Activated B cell treated with CpG ODN at 0.5 μM for 24 hours (primary cell): ENCODE measurements at regions of chr12 and their contacts with region 1.

Region 1: GRCh38 chr12:49110464-49111155 is at the start of gene LMBR1L:
- DNase-seq: peak; percentile 83
- ATAC-seq: peak; percentile 94
- H3K4me3 Mint-ChIP-seq: peak within 1 kb of the TSS; percentile 98
- H3K27ac Mint-ChIP-seq: peak within 1 kb of the TSS; percentile 96
- H3K4me1 Mint-ChIP-seq: peaks cover 46% of the 10 kb centered on the region
- H3K27me3 Mint-ChIP-seq: no peaks in the 10 kb centered on the region
- CTCF ChIP-seq: no peak
- total RNA-seq, gene LMBR1L: 64.2 and 79.9 TPM in 2 replicates

Region 2: GRCh38 chr12:49098035-49098451 is 12.6 kb before region 1 on chr12:
- CTCF ChIA-PET with region 1: interaction called, 32 read pairs
- POLR2A ChIA-PET with region 1: interaction called, 6 read pairs
- intact Hi-C with region 1: loop called (anchors 1 kb)
- DNase-seq: peak; percentile 48
- ATAC-seq: peak; percentile 71
- H3K4me3 Mint-ChIP-seq: no peak overlapping the region
- H3K27ac Mint-ChIP-seq: no peak overlapping the region
- H3K4me1 Mint-ChIP-seq: peaks cover 17% of the 10 kb centered on the region
- H3K27me3 Mint-ChIP-seq: peaks cover 16% of the 10 kb centered on the region
- CTCF ChIP-seq: no peak

Region 3: DNA sequence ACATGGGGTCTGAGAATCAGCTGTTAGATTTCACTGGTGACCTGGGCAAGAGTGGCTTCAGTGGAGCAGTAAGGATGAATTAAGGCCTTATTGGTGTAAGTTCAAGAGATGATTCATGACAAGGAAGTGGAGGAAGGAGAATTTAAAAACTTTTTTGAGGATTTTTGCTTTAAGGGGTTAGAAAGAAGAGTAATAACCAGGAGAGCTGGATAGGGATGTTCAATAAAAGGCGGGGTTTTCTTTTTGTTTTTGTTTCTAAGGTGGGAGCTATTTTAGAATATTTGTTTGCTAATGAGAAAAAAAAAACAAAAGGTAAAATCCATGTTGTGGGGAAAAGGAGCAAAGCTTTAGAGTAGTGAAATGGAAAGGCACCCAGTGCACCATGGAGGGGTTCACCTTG is 35.8 kb after region 1 on chr12:
- CTCF ChIA-PET with region 1: no interaction called
- POLR2A ChIA-PET with region 1: no interaction called
- intact Hi-C with region 1: no loop called
- DNase-seq: no peak
- ATAC-seq: no peak
- H3K4me3 Mint-ChIP-seq: no peak overlapping the region
- H3K27ac Mint-ChIP-seq: no peak overlapping the region
- H3K4me1 Mint-ChIP-seq: peaks cover 4% of the 10 kb centered on the region
- H3K27me3 Mint-ChIP-seq: no peaks in the 10 kb centered on the region
- CTCF ChIP-seq: no peak

Region 4: DNA sequence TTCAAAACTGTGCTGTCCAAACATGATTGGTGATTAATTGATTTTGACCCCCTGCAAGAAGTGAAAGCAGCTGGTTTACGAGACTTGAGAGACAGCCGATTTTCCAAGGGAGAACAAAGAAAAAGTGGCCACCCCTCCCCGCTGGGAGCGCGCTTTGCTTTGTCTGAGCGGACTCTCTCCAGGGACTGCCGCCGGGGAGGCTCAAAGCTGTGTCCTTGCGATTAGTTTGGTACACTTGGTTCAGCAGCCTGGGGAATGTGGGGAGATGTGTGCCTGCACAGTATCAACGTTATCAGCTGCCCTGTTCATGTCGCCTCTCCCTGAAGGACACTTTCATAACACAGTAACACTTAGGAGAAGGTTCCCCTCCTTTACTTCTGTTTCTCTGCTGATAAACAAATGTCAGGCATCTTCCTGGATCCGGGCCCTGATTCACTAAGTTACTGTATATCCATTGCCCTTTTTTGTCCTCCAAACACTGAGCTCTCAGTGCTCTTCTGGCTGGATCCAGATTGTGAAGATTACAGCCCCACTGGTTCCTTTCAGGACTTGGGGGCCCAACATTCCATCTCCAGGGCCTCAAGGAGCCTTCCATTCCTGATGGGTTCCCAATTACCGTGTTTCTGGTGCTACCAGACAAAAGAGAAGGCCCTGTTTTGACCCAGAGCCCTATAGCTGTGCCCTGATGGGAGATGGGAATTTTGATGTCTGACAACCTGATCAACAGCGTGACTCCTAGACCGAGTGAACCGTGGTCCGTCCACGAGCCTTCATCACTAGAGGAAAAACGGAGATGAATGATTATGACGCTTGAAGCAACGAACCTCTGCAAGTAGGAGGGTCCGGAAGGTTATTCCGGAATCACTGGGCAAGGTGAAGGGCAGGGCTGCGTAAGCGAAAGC is 122.6 kb after region 1 on chr12:
- CTCF ChIA-PET with region 1: interaction called, 9 read pairs
- POLR2A ChIA-PET with region 1: interaction called, 3 read pairs
- intact Hi-C with region 1: loop called (anchors 1 kb)
- DNase-seq: no peak
- ATAC-seq: no peak
- H3K4me3 Mint-ChIP-seq: peak overlapping the region; percentile 93
- H3K27ac Mint-ChIP-seq: peak overlapping the region; percentile 89
- H3K4me1 Mint-ChIP-seq: peaks cover 15% of the 10 kb centered on the region
- H3K27me3 Mint-ChIP-seq: no peaks in the 10 kb centered on the region
- CTCF ChIP-seq: no peak